ENCODE measurements at regions of chr5 and their contacts with region 1.

Region 1: DNA sequence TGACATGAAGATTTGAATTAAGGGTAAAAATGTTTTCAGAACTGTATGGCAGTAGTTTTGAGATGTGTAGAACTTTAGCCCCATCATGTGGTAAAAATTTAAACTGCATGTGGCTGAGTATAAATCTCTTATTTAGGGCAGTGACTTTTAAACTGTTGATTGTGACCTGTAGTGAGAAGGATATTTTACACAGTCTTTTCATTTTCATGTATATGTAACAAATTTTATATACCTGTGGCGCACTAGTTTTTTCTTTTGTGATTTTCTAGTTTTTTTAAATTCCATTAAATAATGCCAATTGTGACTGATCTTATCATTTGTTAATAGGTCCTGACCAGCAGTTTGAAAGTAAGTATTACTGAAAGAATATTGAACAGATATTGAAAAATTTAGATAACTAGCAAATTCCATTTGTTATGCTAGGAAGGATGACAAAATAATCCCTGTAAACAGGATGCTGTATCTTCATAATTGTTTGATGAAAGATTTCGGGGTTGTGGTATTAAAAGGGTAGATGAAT is 47.2 kb downstream of the GPBP1 start:
- DNase-seq: no peak
- H3K4me3 ChIP-seq: no peak overlapping the region
- H3K27ac ChIP-seq: no peak overlapping the region
- H3K4me1 ChIP-seq: peaks cover 1 to 24% (median 20%) of the 10 kb centered on the region in 4 donors
- H3K27me3 ChIP-seq: no peaks in the 10 kb centered on the region
- CTCF ChIP-seq: peak; percentile 89 to 95 (median 92)
- EP300 ChIP-seq: no peak
- POLR2A ChIP-seq: no peak

Region 2: GRCh38 chr5:56900858-56901578 is 320.1 kb before region 1 on chr5:
- intact Hi-C with region 1: loop called (anchors 5 kb)
- DNase-seq: no peak
- H3K4me3 ChIP-seq: no peak overlapping the region
- H3K27ac ChIP-seq: no peak overlapping the region
- H3K4me1 ChIP-seq: no peaks in the 10 kb centered on the region
- H3K27me3 ChIP-seq: no peaks in the 10 kb centered on the region
- CTCF ChIP-seq: peak; percentile 72 to 78 (median 75)
- EP300 ChIP-seq: no peak
- POLR2A ChIP-seq: no peak

Region 3: DNA sequence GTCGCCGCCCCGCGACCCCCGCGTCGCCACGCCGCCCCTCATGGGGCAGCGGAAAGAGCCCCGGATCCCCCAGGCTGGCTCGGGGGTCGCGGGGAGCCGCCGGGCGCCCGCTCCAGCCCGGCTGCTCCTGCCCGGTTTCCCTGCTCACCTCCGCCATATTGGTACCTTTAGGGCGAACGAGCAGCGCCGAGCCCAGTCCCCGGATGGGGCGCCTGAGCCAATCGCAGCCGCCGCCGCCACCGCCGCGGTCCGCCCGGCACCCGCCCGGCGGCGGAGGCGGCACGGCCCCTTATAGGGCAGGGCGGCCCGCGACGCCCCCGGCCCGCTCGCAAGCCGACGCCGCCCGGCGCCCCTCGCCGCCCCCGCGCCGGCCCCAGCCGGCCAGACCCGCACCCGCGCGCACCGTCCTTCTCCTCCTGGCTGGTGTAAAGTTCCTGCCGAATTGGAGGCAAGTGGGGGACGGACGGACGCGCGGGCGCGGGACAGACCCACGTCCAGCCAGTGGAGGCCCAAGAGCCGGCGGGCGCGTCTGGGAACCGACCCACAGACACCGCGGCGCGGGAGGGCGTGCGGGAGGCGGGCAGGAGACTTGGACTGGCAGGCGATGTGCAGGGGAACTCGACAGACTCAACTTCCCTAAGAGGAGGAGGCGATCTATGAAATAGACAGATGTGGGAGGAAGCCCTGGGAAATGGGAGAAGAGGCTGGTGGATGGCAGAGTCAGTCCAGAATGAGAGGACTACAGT is 269.0 kb before region 1 on chr5 and contains the start of gene MIER3:
- intact Hi-C with region 1: loop called (anchors 2 kb)
- DNase-seq: no peak
- H3K4me3 ChIP-seq: peak within 1 kb of the TSS; percentile 89 to 95 (median 92)
- H3K27ac ChIP-seq: peak within 1 kb of the TSS; percentile 83 to 93 (median 92)
- H3K4me1 ChIP-seq: peaks cover 18 to 27% (median 24%) of the 10 kb centered on the region in 4 donors
- H3K27me3 ChIP-seq: no peaks in the 10 kb centered on the region
- CTCF ChIP-seq: no peak
- EP300 ChIP-seq: no peak
- POLR2A ChIP-seq: no peak
- total RNA-seq, gene MIER3: 11.1 to 16.2 (median 13.0) TPM

Region 4: DNA sequence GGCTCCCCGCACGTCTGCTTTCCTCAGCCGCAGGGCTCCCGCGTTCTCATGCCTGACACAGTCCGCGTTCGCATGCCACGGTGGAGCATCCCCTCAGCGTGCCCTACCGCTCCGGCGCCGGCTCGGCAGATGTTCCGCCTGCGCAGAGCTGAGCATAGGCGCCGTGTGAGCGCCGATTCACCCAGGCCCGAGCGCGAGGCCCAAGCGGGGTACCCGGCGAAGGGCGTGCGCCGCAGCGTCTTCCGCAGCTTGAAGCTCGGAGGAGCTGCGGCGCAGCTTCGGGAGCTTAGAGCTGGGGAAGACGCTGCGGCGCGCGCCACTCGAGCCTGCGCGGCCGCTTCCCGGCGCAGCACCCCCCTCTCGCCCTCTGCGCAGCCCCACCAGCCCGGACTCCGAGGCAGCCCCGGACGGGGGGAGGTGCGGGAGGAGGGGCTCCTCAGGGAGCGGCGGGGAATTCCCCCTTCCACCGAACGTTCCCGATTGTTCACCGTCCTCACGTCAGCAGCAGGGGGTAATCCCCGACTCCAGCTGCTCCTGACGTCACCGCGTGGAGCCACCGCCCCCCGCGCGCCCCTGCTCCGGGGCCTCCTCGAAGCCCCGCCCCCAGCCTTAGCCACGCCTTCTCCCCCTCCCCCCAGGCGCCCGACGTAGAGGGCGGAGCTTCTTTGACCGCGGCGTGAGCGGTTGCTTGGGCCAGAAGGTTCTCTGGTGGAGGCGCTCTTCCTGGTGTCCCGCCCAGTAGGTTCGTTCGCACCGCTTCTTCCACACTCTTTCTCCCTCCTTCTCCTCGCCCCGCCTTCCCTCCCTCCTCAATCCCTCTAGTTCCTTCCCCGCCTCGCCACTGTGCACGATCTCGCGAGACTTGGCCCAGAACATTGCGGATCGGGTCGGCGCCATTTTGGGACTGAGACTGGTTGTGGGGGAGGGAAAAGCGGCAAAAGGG is 47.7 kb before region 1 on chr5 and contains the start of gene GPBP1:
- intact Hi-C with region 1: loop called (anchors 5 kb)
- DNase-seq: peak; percentile 99
- H3K4me3 ChIP-seq: peak within 1 kb of the TSS; percentile 82 to 99 (median 92)
- H3K27ac ChIP-seq: peak within 1 kb of the TSS; percentile 97 to 100 (median 98)
- H3K4me1 ChIP-seq: peaks cover 18 to 36% (median 34%) of the 10 kb centered on the region in 4 donors
- H3K27me3 ChIP-seq: no peaks in the 10 kb centered on the region
- CTCF ChIP-seq: no peak
- EP300 ChIP-seq: peak; percentile 65
- POLR2A ChIP-seq: peak; percentile 70
- total RNA-seq, gene GPBP1: 41.8 to 54.0 (median 48.6) TPM

Region 5: GRCh38 chr5:57366744-57367143 is 145.6 kb after region 1 on chr5:
- intact Hi-C with region 1: no loop called
- DNase-seq: no peak
- H3K4me3 ChIP-seq: no peak overlapping the region
- H3K27ac ChIP-seq: no peak overlapping the region
- H3K4me1 ChIP-seq: no peaks in the 10 kb centered on the region
- H3K27me3 ChIP-seq: no peaks in the 10 kb centered on the region
- CTCF ChIP-seq: no peak
- EP300 ChIP-seq: no peak
- POLR2A ChIP-seq: no peak

Measured in esophagus muscularis mucosa (tissue), 4 donors.